Activated CD4-positive, alpha-beta T cell treated with anti-CD3 and anti-CD28 coated beads for 36 hours (primary cell): ENCODE measurements at regions of chr4 and their contacts with region 1.

Region 1: DNA sequence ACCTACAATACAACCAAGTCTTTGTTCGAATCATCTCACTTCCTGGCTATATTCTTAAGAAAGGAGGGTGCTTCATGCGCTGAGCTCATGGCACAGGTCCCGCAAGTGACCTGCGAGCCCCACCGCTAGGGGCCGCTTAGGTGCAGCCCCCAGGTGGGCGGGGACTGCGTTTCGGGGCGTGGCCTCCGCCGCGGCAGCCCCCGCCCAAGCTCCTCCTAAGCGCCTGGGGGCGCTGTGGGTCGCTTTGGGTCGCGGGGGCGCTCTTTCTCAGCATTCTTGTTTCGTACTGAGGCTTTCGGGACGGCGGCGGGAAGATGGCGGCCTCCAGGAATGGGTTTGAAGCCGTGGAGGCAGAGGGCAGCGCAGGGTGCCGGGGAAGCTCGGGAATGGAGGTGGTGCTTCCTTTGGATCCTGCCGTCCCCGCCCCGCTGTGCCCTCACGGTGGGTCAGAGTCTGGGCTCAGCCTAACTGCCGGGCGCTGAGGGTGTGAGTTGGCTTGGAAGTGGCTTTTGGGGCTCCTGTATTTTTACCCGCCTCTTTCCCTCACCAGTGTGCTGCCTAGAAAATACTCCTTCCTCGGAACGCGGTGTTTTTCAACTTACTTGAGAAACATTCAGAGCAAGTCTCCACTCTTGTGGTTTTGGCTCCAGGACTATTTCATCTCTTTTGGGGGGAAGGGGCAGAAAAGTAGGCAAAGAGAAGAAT is at the start of gene ZCCHC4:
- DNase-seq: peak; percentile 94
- ATAC-seq: peak; percentile 99
- H3K4me3 Mint-ChIP-seq: peak within 1 kb of the TSS; percentile 96
- H3K27ac Mint-ChIP-seq: peak within 1 kb of the TSS; percentile 94
- H3K4me1 Mint-ChIP-seq: peaks cover 22% of the 10 kb centered on the region
- H3K27me3 Mint-ChIP-seq: peaks cover 3% of the 10 kb centered on the region
- total RNA-seq, gene ZCCHC4: 11.7 to 12.3 TPM

Region 2: GRCh38 chr4:25159884-25160713 is 152.5 kb before region 1 on chr4 and contains the start of gene SEPSECS:
- CTCF ChIA-PET with region 1: interaction called, 9 read pairs
- POLR2A ChIA-PET with region 1: interaction called, 5 read pairs
- intact Hi-C with region 1: loop called (anchors 1 kb)
- DNase-seq: peak; percentile 96
- ATAC-seq: peak; percentile 90
- H3K4me3 Mint-ChIP-seq: peak within 1 kb of the TSS; percentile 85
- H3K27ac Mint-ChIP-seq: peak within 1 kb of the TSS; percentile 91
- H3K4me1 Mint-ChIP-seq: peaks cover 37% of the 10 kb centered on the region
- H3K27me3 Mint-ChIP-seq: no peaks in the 10 kb centered on the region
- total RNA-seq, gene SEPSECS: 10.4 to 15.4 TPM

Region 3: DNA sequence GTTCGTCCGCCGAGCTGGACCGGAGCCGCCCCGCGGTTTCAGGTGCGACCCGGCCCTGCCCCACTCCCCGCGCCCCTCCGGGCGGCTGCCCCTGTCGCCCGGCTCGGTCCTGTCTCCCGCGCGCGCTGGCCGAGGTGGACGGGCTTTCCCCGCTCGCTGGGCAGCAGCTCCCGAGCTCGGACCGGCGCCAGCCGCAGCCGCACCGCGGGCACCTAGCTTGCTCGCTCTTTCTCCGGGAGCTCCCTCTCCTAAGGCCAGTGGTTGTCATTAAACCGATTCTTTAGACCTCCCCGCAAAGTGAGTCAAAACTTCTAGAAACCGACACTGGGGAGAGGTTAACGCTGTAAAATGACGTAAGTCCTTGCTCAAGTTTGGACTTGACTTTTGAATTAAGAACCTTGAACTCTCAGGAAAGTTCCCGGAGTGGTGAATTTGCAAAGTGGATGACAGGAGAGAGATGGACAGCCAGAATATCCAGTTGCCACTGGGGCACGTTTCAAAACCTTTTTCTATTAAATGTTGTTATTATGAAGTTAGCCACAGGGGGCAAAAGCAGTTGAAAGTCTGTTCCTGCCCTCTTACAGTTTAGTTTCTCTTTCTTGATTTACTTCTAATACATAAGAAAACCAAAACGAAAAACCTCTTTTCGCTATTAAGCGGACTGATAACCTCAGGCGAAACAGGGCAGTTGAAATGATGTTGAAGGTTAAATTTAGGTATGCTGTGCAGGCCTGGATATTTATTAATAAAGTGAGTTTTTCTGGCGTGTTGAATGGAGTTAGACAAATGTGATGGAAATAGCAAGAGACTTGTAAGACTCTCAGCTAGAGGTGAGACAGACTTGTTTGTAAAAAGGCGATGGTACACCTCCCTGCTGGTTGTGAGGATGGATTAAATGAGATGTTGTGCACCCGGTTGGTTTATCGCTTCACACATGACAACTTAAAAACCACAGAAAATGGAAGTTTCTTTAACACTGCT is 78.0 kb before region 1 on chr4:
- CTCF ChIA-PET with region 1: interaction called, 11 read pairs
- POLR2A ChIA-PET with region 1: interaction called, 7 read pairs
- intact Hi-C with region 1: loop called (anchors 1 kb)
- DNase-seq: peak; percentile 58
- ATAC-seq: peak; percentile 62
- H3K4me3 Mint-ChIP-seq: peak overlapping the region; percentile 91
- H3K27ac Mint-ChIP-seq: peak overlapping the region; percentile 97
- H3K4me1 Mint-ChIP-seq: peaks cover 45% of the 10 kb centered on the region
- H3K27me3 Mint-ChIP-seq: no peaks in the 10 kb centered on the region

Region 4: DNA sequence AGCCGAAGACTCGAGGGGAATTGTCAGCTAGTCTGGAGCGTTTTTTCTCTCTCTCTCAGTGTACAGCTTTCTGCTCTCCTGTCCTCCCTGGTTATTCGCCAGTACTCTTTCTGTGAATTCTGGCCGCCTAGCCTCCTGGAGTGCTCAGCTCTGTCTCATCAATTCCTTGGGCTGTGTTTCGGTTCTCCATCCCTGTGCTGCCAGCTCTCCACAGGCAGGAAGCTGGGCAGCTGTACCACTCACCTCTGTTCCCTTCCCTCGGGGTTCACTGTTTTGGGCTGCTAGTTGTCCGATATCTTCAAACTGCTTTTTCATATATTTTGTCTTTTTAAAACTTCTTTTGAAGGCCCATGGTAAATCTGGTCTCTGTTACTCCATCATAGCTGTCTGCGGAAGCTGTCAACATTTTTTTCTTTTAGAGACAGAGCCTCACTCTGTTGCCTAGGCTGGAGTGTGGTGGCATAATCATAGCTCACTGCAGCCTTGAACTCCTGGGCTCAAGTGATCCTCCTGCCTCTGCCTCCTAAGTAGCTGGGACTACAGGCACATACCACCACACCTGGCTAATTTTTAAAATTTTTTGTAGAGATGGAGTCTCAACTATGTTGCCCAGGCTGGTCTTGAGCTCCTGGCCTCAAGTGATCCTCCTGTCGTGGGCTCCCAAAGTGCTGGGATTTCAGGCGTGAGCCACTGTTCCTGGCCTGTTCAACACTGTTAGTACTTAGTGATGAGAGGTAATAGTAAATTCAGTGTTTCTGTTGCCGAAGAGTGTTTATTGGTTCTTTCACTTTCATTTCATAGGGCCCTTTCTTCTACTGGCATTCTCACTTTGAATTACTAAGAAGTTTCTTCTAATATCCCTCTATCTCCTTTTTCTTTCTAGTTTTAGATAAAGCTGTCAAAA is 18.5 kb after region 1 on chr4:
- CTCF ChIA-PET with region 1: interaction called, 25 read pairs
- POLR2A ChIA-PET with region 1: interaction called, 3 read pairs
- intact Hi-C with region 1: no loop called
- DNase-seq: no peak
- ATAC-seq: peak; percentile 93
- H3K4me3 Mint-ChIP-seq: peak overlapping the region; percentile 61
- H3K27ac Mint-ChIP-seq: peak overlapping the region; percentile 85
- H3K4me1 Mint-ChIP-seq: peaks cover 12% of the 10 kb centered on the region
- H3K27me3 Mint-ChIP-seq: no peaks in the 10 kb centered on the region

Region 5: GRCh38 chr4:25376754-25377571 is 64.3 kb after region 1 on chr4 and contains the start of gene ANAPC4:
- CTCF ChIA-PET with region 1: interaction called, 8 read pairs
- POLR2A ChIA-PET with region 1: interaction called, 4 read pairs
- intact Hi-C with region 1: loop called (anchors 1 kb)
- DNase-seq: peak; percentile 99
- ATAC-seq: peak; percentile 98
- H3K4me3 Mint-ChIP-seq: no peak within 1 kb of the TSS
- H3K27ac Mint-ChIP-seq: peak within 1 kb of the TSS; percentile 74
- H3K4me1 Mint-ChIP-seq: peaks cover 8% of the 10 kb centered on the region
- H3K27me3 Mint-ChIP-seq: no peaks in the 10 kb centered on the region
- total RNA-seq, gene ANAPC4: 19.2 to 31.2 TPM